ENCODE measurements at regions of chr2 and their contacts with region 1.

Region 1: GRCh38 chr2:160252278-160252887 is 52.3 kb upstream of the ITGB6 start:
- DNase-seq: no peak
- H3K4me3 Mint-ChIP-seq: no peak overlapping the region
- H3K27ac Mint-ChIP-seq: no peak overlapping the region
- H3K4me1 Mint-ChIP-seq: no peaks in the 10 kb centered on the region
- H3K27me3 Mint-ChIP-seq: peaks cover 1% of the 10 kb centered on the region

Region 2: DNA sequence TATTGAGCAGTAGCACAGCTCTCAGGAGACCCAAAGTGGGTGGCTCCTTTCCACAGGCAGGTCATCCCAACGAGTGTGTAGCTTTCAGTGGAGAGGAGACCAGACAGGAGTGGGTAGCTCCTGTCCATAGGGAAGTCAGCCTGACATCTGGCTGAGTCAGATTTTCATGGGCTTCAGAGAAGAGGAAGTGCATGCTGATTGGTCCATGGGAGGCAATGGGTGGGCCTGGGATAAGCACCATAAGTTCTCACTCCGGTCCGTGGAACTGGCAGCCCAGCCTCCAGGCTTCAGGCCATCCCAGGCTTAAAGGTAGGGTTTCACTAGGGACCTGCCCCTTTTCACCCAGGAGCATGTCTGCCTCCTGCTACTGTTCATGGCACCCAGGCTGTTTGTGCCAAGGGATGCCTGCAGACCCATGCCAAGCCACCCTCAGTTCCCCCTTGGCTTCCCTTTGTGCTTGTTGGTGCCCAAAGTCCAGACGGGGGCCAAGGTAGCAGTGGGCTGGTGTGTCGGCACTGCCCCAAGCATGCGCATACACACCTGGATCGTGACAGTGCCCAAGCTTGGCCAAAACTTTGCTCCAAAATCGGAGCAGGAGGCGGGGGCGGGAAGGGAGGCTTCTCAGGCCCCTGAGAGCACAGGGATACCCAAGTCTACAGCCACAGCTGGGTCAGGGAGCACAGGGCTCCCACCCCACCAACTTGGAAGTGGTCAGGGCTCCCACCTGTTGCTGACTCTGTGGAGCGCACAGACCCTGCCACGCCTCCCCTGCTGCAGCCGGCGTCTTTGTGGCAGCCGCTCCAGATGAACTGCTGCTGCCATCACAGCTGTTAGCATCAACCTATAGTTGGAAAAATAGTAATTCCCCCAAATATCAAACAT is 513.6 kb before region 1 on chr2:
- CTCF ChIA-PET with region 1: no interaction called
- POLR2A ChIA-PET with region 1: no interaction called
- intact Hi-C with region 1: no loop called
- DNase-seq: no peak
- H3K4me3 Mint-ChIP-seq: no peak overlapping the region
- H3K27ac Mint-ChIP-seq: no peak overlapping the region
- H3K4me1 Mint-ChIP-seq: peaks cover 30% of the 10 kb centered on the region
- H3K27me3 Mint-ChIP-seq: no peaks in the 10 kb centered on the region

Region 3: DNA sequence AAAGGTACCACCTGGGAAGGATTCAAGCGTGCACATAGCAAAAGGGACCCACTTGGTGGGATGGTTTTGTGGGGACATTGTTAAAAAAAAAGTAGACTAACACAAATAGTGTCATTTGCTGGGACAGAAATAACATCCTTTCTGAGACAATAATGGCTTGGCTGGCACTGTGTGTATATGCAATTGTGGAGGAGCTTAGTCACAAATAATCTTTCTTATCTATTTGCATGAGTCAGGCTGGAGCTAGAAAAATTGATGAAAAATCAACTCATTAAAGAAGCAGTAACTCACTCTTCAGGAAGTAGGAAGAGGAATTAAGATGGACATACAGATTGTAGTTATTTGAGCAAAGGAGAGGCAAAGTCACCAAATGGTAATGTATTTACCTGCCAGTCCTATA is 22.8 kb before region 1 on chr2:
- CTCF ChIA-PET with region 1: interaction called, 12 read pairs
- POLR2A ChIA-PET with region 1: no interaction called
- intact Hi-C with region 1: no loop called
- DNase-seq: no peak
- H3K4me3 Mint-ChIP-seq: no peak overlapping the region
- H3K27ac Mint-ChIP-seq: no peak overlapping the region
- H3K4me1 Mint-ChIP-seq: peaks cover 14% of the 10 kb centered on the region
- H3K27me3 Mint-ChIP-seq: peaks cover 16% of the 10 kb centered on the region

Region 4: GRCh38 chr2:160332318-160332717 is 79.9 kb after region 1 on chr2:
- CTCF ChIA-PET with region 1: no interaction called
- POLR2A ChIA-PET with region 1: no interaction called
- intact Hi-C with region 1: no loop called
- DNase-seq: peak; percentile 33
- H3K4me3 Mint-ChIP-seq: no peak overlapping the region
- H3K27ac Mint-ChIP-seq: peak overlapping the region; percentile 72
- H3K4me1 Mint-ChIP-seq: peaks cover 83% of the 10 kb centered on the region
- H3K27me3 Mint-ChIP-seq: no peaks in the 10 kb centered on the region

Region 5: DNA sequence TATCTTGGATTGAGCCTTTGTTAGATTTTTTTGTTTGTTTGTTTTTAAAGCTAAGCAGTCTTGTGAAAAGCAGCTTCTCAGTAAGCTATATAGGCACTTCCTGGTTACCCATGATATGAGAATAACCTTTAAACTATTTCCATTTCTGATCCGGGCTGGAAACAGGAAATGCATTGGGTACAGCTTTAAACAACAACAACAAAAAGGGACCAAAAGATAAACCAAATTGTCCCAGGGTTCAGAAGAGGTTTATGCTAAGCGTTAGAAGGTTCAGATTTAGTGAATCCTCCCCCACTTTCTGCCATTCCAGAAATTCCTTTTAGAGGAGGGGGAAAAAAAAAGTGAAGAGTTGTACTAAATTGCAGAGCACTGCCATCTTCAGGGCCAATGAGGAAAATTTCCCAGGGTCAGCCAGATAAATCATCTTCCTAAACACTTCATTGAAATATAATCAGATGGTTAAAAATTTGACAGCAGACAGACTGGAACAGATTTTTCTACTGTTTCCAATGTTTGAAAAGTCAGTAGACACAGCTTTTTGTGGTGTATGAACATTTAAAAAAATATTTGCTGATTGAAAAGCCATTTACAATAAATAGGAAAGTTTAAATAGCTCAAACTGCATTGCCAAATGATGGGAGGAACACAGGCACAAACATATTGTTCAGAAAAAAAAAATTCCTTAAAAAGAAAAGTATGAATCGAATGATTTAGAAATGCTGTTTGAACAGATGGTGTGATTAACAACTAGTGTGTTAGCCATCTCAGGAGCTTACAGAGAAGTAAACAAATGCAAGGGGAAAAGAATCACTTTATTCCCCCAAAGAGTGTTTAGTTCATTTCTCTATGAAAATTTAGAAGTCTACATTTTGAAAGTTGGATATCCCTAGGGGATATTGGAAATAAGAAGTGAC is 717.9 kb after region 1 on chr2:
- CTCF ChIA-PET with region 1: interaction called, 15 read pairs
- POLR2A ChIA-PET with region 1: no interaction called
- intact Hi-C with region 1: loop called (anchors 2 kb)
- DNase-seq: no peak
- H3K4me3 Mint-ChIP-seq: no peak overlapping the region
- H3K27ac Mint-ChIP-seq: no peak overlapping the region
- H3K4me1 Mint-ChIP-seq: peaks cover 2% of the 10 kb centered on the region
- H3K27me3 Mint-ChIP-seq: no peaks in the 10 kb centered on the region